HCT116 (cell line): ENCODE measurements at regions of chr11 and their contacts with region 1.

Region 1: DNA sequence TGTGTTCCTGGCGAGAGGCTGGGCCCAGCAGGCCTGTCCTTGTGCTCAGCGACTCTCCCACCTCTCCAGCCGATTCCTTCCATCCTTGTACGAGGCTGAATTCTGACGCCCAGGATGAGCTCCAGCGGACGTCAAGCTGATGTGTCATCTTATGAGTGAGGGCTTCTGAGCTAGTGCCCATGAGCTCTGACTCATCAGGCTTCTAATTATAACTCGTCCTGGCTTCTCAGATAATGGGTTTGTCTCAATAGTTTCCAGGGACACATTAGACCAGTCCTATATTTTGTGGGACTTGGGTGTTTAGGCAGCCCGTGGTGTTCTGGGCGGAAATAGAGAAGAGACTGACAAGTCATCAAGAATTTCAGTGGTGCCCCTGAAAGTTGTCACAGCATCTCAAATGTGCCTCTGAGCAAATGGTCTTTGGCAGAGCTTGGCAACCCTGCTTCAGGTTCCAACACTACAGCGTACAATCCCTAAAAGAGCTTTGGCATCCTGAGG is 108.2 kb upstream of the CD44 start:
- DNase-seq: peak; percentile 87
- ATAC-seq: peak; percentile 95
- H3K4me3 ChIP-seq: peak overlapping the region; percentile 8 to 35
- H3K27ac ChIP-seq: peak overlapping the region; percentile 70
- H3K4me1 ChIP-seq: peaks cover 27 to 54% of the 10 kb centered on the region in 2 experiments
- H3K27me3 ChIP-seq: no peaks in the 10 kb centered on the region
- CTCF ChIP-seq: no peak
- POLR2A ChIP-seq: no peak
- RAD21 ChIP-seq: no peak; the same call in 1 of the 2 replicates

Region 2: GRCh38 chr11:35009191-35009940 is 21.4 kb before region 1 on chr11:
- CTCF ChIA-PET with region 1: interaction called, 10 read pairs
- POLR2A ChIA-PET with region 1: interaction called, 28 read pairs
- RAD21 ChIA-PET with region 1: interaction called, 3 read pairs
- intact Hi-C with region 1: no loop called
- DNase-seq: peak; percentile 96
- ATAC-seq: peak; percentile 78
- H3K4me3 ChIP-seq: peak overlapping the region in 1 of 2 experiments; percentile 21; a peak in 2 of 4 replicates
- H3K27ac ChIP-seq: peak overlapping the region; percentile 99
- H3K4me1 ChIP-seq: peaks cover 90 to 92% of the 10 kb centered on the region in 2 experiments
- H3K27me3 ChIP-seq: no peaks in the 10 kb centered on the region
- CTCF ChIP-seq: peak in 1 of 3 experiments; percentile 9; a peak in 1 of 6 replicates
- POLR2A ChIP-seq: no peak
- RAD21 ChIP-seq: peak; percentile 56